ENCODE measurements at regions of chr12 and their contacts with region 1.

Region 1: DNA sequence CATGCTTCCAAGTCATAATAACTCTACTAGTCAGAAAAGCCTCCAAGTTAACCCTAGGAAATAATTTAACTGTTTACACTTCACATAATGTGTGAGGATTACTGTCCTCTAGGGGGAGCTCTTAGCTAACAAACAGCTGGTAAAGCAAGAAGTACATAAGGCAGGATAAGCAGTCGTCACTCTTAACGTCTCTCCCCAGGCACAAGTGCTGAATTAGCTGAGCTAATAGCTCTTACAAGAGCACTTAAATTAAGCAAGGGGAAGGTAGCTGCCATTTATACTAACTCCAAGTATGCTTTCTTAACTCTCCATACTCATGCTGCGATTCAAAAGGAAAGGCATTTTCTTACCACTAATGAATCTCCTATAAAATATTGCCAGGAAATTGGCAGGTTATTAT is 79.3 kb upstream of the TSPAN11 start:
- DNase-seq: peak; percentile 44
- H3K4me3 ChIP-seq: peak overlapping the region in 1 of 2 experiments; percentile 25; a peak in 1 of 4 replicates
- H3K27ac ChIP-seq: no peak overlapping the region
- H3K4me1 ChIP-seq: no peaks in the 10 kb centered on the region; a peak in 1 of 4 replicates
- H3K27me3 ChIP-seq: no peaks in the 10 kb centered on the region
- CTCF ChIP-seq: peak; percentile 90
- EP300 ChIP-seq: no peak
- RAD21 ChIP-seq: peak; percentile 89

Region 2: GRCh38 chr12:30862486-30862885 is 15.2 kb after region 1 on chr12:
- CTCF ChIA-PET with region 1: interaction called, 20 read pairs
- POLR2A ChIA-PET with region 1: no interaction called
- DNase-seq: peak; percentile 22
- H3K4me3 ChIP-seq: no peak overlapping the region
- H3K27ac ChIP-seq: no peak overlapping the region
- H3K4me1 ChIP-seq: no peaks in the 10 kb centered on the region; a peak in 1 of 4 replicates
- H3K27me3 ChIP-seq: no peaks in the 10 kb centered on the region
- CTCF ChIP-seq: no peak
- EP300 ChIP-seq: no peak
- RAD21 ChIP-seq: no peak

Region 3: DNA sequence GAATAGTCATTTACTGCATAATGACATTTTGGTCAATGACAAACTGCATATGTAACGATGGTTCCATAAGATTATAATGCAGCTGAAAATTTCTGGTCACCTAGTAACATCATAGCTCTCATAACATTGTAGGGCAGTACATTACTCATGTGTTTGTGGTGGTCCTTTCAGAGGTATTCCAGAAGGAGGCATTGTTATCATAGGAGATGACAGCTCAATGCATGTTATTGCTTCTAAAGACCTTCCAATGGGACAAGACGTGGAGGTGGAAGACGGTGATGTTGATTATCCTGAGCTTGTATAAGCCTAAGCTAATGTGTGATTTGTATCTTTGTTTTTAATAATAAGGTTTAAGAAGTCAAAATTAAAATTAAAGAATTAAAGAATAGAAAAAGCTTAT is 35.4 kb after region 1 on chr12:
- CTCF ChIA-PET with region 1: interaction called, 10 read pairs
- POLR2A ChIA-PET with region 1: no interaction called
- DNase-seq: no peak
- H3K4me3 ChIP-seq: no peak overlapping the region
- H3K27ac ChIP-seq: no peak overlapping the region
- H3K4me1 ChIP-seq: no peaks in the 10 kb centered on the region
- H3K27me3 ChIP-seq: no peaks in the 10 kb centered on the region; the same call in 1 of the 2 replicates
- CTCF ChIP-seq: peak; percentile 40
- EP300 ChIP-seq: no peak
- RAD21 ChIP-seq: peak; percentile 78

Region 4: GRCh38 chr12:30985814-30986452 is 138.7 kb after region 1 on chr12:
- CTCF ChIA-PET with region 1: interaction called, 442 read pairs
- POLR2A ChIA-PET with region 1: interaction called, 4 read pairs
- DNase-seq: peak; percentile 88
- H3K4me3 ChIP-seq: no peak overlapping the region
- H3K27ac ChIP-seq: no peak overlapping the region
- H3K4me1 ChIP-seq: peaks cover 0 to 14% of the 10 kb centered on the region in 2 experiments; a peak in 1 of 4 replicates
- H3K27me3 ChIP-seq: no peaks in the 10 kb centered on the region
- CTCF ChIP-seq: peak; percentile 80
- EP300 ChIP-seq: no peak
- RAD21 ChIP-seq: peak; percentile 92

Region 5: GRCh38 chr12:31274520-31275300 is 427.5 kb after region 1 on chr12:
- CTCF ChIA-PET with region 1: interaction called, 57 read pairs
- POLR2A ChIA-PET with region 1: no interaction called
- DNase-seq: no peak
- H3K4me3 ChIP-seq: no peak overlapping the region
- H3K27ac ChIP-seq: no peak overlapping the region
- H3K4me1 ChIP-seq: no peaks in the 10 kb centered on the region
- H3K27me3 ChIP-seq: no peaks in the 10 kb centered on the region
- CTCF ChIP-seq: no peak
- EP300 ChIP-seq: no peak
- RAD21 ChIP-seq: no peak